ENCODE measurements at regions of chr2 and their contacts with region 1.

Region 1: GRCh38 chr2:230416061-230416721 is at the start of gene SP100:
- DNase-seq: peak; percentile 86
- H3K4me3 Mint-ChIP-seq: peak within 1 kb of the TSS; percentile 89
- H3K27ac Mint-ChIP-seq: peak within 1 kb of the TSS; percentile 98
- H3K4me1 Mint-ChIP-seq: peaks cover 46% of the 10 kb centered on the region
- H3K27me3 Mint-ChIP-seq: no peaks in the 10 kb centered on the region
- CTCF ChIP-seq: no peak
- total RNA-seq, gene SP100: 54.5 and 56.9 TPM in 2 replicates

Region 2: GRCh38 chr2:230007931-230008707 is 408.1 kb before region 1 on chr2:
- CTCF ChIA-PET with region 1: no interaction called
- POLR2A ChIA-PET with region 1: interaction called, 3 read pairs
- intact Hi-C with region 1: loop called (anchors 1 kb)
- DNase-seq: peak; percentile 82
- H3K4me3 Mint-ChIP-seq: no peak overlapping the region
- H3K27ac Mint-ChIP-seq: no peak overlapping the region
- H3K4me1 Mint-ChIP-seq: peaks cover 5% of the 10 kb centered on the region
- H3K27me3 Mint-ChIP-seq: no peaks in the 10 kb centered on the region
- CTCF ChIP-seq: peak; percentile 84

Region 3: GRCh38 chr2:230219419-230220331 is 196.5 kb before region 1 on chr2 and contains the start of gene SP110:
- CTCF ChIA-PET with region 1: no interaction called
- POLR2A ChIA-PET with region 1: interaction called, 16 read pairs
- intact Hi-C with region 1: no loop called
- DNase-seq: peak; percentile 97
- H3K4me3 Mint-ChIP-seq: peak within 1 kb of the TSS; percentile 87
- H3K27ac Mint-ChIP-seq: peak within 1 kb of the TSS; percentile 80
- H3K4me1 Mint-ChIP-seq: peaks cover 14% of the 10 kb centered on the region
- H3K27me3 Mint-ChIP-seq: no peaks in the 10 kb centered on the region
- CTCF ChIP-seq: no peak
- total RNA-seq, gene SP110: 11.9 and 17.1 TPM in 2 replicates

Region 4: DNA sequence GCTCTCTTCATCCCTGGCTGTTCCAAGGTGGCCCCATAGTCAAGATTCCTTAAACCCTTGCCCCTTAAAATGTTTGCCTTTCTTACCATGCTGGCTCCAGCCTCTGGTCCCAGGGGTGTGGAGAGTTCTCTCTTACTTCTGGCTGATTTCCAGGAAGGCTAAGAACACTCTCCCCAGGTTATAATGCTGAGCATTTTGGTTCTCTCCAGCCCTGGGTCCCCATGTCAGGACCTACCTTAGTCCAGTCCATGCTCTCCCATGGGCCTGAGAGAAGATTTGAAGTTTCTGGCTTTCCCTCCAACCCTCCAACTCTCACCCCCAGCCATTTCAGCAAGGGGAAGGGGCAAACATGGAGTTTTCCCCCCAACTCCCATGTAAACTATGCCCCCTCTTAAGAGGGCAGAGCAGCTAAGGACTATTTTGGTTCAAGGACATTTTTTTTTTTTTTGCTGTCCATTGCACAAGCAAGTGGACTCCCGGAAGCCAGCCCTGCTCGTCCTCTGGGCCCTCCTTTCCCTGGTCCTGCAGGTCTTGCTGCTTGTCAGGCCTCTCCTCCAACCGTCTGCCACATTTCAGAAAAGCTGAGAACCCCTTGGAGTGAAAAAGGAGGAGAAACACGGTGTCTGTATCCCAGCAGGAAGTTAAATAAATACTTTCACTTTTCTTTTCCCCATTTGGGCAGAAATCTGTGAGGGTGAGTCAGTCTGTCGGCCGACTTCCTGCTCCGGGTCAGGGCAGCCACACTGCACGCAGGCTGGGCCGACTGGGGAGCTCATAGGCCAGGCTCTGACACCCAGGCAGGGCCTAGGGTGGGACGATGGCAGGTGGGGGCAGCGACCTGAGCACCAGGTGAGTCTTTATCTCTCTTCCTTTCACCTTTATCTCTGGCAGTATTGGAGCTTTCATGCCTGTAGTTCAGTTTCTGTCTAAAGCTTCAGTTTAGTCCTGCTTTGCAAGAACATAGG is 89.5 kb before region 1 on chr2 and contains the start of gene SP140L:
- CTCF ChIA-PET with region 1: no interaction called
- POLR2A ChIA-PET with region 1: interaction called, 22 read pairs
- intact Hi-C with region 1: loop called (anchors 5 kb)
- DNase-seq: peak; percentile 80
- H3K4me3 Mint-ChIP-seq: peak within 1 kb of the TSS; percentile 88
- H3K27ac Mint-ChIP-seq: peak within 1 kb of the TSS; percentile 97
- H3K4me1 Mint-ChIP-seq: peaks cover 15% of the 10 kb centered on the region
- H3K27me3 Mint-ChIP-seq: no peaks in the 10 kb centered on the region
- CTCF ChIP-seq: no peak
- total RNA-seq, gene SP140L: 20.3 and 33.2 TPM in 2 replicates

Measured in MCF 10A (cell line).